ENCODE measurements at regions of chr20 and their contacts with region 1.

Region 1: GRCh38 chr20:59042796-59043660 is 442 bp upstream of the PRELID3B start:
- DNase-seq: peak; percentile 74 to 94 (median 86)
- H3K4me3 ChIP-seq: peak overlapping the region; percentile 58 to 96 (median 85)
- H3K27ac ChIP-seq: peak overlapping the region; percentile 0 to 94 (median 85)
- H3K27me3 ChIP-seq: no peaks in the 10 kb centered on the region
- CTCF ChIP-seq: peak in 31 of 56 donors; percentile 5 to 66 (median 29)

Region 2: GRCh38 chr20:58888521-58889333 is 154.3 kb before region 1 on chr20:
- intact Hi-C with region 1: loop called (anchors 1 to 5 kb)
- DNase-seq: peak; percentile 45 to 86 (median 74)
- H3K4me3 ChIP-seq: peak overlapping the region; percentile 23 to 85 (median 67)
- H3K27ac ChIP-seq: peak overlapping the region in 26 of 59 donors; percentile 2 to 99 (median 78)
- H3K27me3 ChIP-seq: no peaks in the 10 kb centered on the region
- CTCF ChIP-seq: no peak

Region 3: DNA sequence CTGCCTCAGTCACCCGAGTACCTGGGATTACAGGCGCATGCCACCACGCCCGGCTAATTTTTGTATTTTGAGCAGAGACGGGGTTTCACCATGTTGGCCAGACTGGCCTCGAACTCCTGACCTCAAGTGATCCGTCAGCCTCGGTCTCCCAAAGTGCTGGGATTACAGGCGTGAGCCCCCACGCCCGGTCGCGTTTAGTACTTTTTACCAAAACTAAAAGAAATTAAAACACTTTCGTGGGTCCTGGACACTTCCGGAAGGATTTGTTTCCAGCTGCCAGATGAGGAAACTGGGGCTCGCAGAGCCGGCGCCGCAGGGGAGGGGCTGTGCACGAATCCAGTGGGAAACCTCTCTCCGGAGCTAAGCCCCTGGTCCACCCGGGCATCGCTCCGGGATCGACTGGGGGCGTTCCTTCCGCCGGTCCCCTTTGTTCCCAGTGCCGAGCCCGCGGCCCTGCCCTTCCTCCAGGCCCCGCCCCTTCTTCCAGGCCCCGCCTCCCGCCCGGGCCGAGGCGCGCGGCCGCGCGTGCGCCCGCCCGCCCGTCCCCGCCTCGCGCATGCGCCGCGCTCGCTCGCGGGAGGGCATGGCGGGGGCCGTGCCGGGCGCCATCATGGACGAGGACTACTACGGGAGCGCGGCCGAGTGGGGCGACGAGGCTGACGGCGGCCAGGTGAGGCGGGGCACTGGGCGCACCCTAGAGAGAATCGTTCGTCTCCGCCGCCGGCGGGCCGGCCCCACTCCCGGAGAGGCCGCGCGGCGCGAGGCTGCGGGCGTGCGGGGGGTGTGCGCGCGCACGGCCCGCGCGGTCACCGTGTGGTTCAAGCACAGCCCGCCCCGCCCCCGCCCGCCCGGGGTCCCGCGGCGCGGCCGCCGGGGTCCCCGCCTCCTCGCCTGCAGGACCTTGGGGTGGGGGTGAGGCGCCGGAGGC is 62.1 kb before region 1 on chr20 and contains the start of gene NELFCD:
- intact Hi-C with region 1: loop called in 1 of 2 experiments (anchors 5 kb)
- DNase-seq: peak; percentile 56 to 87 (median 72)
- H3K4me3 ChIP-seq: peak within 1 kb of the TSS; percentile 57 to 92 (median 77)
- H3K27ac ChIP-seq: peak within 1 kb of the TSS in 58 of 59 donors; percentile 14 to 94 (median 82)
- H3K27me3 ChIP-seq: no peaks in the 10 kb centered on the region
- CTCF ChIP-seq: peak in 2 of 56 donors; percentile 7 to 9
- total RNA-seq, gene NELFCD: 46.8 to 90.1 (median 64.8) TPM

Region 4: GRCh38 chr20:59032023-59032712 is 10.9 kb before region 1 on chr20 and contains the start of gene ATP5F1E:
- intact Hi-C with region 1: loop called in 1 of 2 experiments (anchors 1 kb)
- DNase-seq: peak; percentile 92 to 98 (median 97)
- H3K4me3 ChIP-seq: peak within 1 kb of the TSS; percentile 60 to 97 (median 85)
- H3K27ac ChIP-seq: peak within 1 kb of the TSS; percentile 68 to 98 (median 92)
- H3K27me3 ChIP-seq: no peaks in the 10 kb centered on the region
- CTCF ChIP-seq: peak in 15 of 56 donors; percentile 4 to 43 (median 15)
- total RNA-seq, gene ATP5F1E: 31.5 to 78.6 (median 49.1) TPM

Region 5: GRCh38 chr20:59222253-59223181 is 179.5 kb after region 1 on chr20:
- intact Hi-C with region 1: loop called in 1 of 2 experiments (anchors 5 kb)
- DNase-seq: peak; percentile 61 to 87 (median 74)
- H3K4me3 ChIP-seq: peak overlapping the region; percentile 21 to 83 (median 64)
- H3K27ac ChIP-seq: peak overlapping the region in 42 of 59 donors; percentile 4 to 81 (median 52)
- H3K27me3 ChIP-seq: no peaks in the 10 kb centered on the region
- CTCF ChIP-seq: peak; percentile 71 to 98 (median 93)

Region 6: GRCh38 chr20:59495894-59496510 is 453.0 kb after region 1 on chr20:
- intact Hi-C with region 1: loop called in 1 of 2 experiments (anchors 10 kb)
- DNase-seq: peak; percentile 62 to 79 (median 74)
- H3K4me3 ChIP-seq: no peak overlapping the region
- H3K27ac ChIP-seq: no peak overlapping the region
- H3K27me3 ChIP-seq: peaks cover 0 to 37% (median 8%) of the 10 kb centered on the region in 45 donors
- CTCF ChIP-seq: peak in 55 of 56 donors; percentile 74 to 94 (median 86)

Measured in dorsolateral prefrontal cortex (tissue), 120 donors.